Prostate gland (tissue), 2 donors: ENCODE measurements at regions of chr1 and their contacts with region 1.

Region 1: GRCh38 chr1:18949686-18950400 is 6.6 kb downstream of the IFFO2 start:
- DNase-seq: no peak
- H3K4me3 ChIP-seq: peak overlapping the region in 1 of 2 donors; percentile 14
- H3K27ac ChIP-seq: peak overlapping the region; percentile 84 to 91
- H3K4me1 ChIP-seq: peaks cover 59% of the 10 kb centered on the region
- H3K27me3 ChIP-seq: no peaks in the 10 kb centered on the region
- CTCF ChIP-seq: peak in 1 of 4 experiments; percentile 29
- POLR2A ChIP-seq: no peak

Region 2: DNA sequence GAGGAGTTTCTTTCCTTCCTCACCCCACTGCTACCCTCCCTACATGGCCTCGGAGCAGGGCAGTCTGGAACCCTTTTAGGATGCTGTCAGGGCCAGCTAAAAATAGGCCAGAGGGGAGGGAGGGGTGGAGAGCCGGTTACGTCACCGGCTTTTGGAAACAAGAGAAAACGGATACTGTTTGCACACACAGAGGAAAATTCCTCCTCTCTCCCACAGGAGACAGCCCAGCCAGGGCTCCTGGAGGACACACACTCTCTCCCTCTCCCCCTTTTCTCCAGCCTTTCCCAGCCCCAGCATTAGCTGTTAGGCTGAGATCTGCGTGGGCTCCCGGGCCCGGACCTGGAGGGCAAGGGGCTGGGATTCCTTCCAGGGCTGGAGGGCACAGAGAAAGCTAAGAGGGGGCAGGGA is 27.5 kb before region 1 on chr1:
- intact Hi-C with region 1: loop called (anchors 2 kb)
- DNase-seq: peak; percentile 79
- H3K4me3 ChIP-seq: no peak overlapping the region
- H3K27ac ChIP-seq: peak overlapping the region; percentile 80 to 84
- H3K4me1 ChIP-seq: peaks cover 22% of the 10 kb centered on the region
- H3K27me3 ChIP-seq: no peaks in the 10 kb centered on the region
- CTCF ChIP-seq: peak in 2 of 4 experiments; percentile 21 to 37
- POLR2A ChIP-seq: peak; percentile 59

Region 3: GRCh38 chr1:19096036-19096833 is 146.4 kb after region 1 on chr1:
- intact Hi-C with region 1: loop called (anchors 5 kb)
- DNase-seq: peak; percentile 77
- H3K4me3 ChIP-seq: no peak overlapping the region
- H3K27ac ChIP-seq: no peak overlapping the region
- H3K4me1 ChIP-seq: no peaks in the 10 kb centered on the region
- H3K27me3 ChIP-seq: no peaks in the 10 kb centered on the region
- CTCF ChIP-seq: peak; percentile 29 to 86 (median 68)
- POLR2A ChIP-seq: no peak

Region 4: GRCh38 chr1:19197845-19198244 is 248.0 kb after region 1 on chr1:
- intact Hi-C with region 1: no loop called
- DNase-seq: no peak
- H3K4me3 ChIP-seq: no peak overlapping the region
- H3K27ac ChIP-seq: no peak overlapping the region
- H3K4me1 ChIP-seq: no peaks in the 10 kb centered on the region
- H3K27me3 ChIP-seq: no peaks in the 10 kb centered on the region
- CTCF ChIP-seq: no peak
- POLR2A ChIP-seq: no peak